ENCODE measurements at regions of chr4 and their contacts with region 1.

Region 1: DNA sequence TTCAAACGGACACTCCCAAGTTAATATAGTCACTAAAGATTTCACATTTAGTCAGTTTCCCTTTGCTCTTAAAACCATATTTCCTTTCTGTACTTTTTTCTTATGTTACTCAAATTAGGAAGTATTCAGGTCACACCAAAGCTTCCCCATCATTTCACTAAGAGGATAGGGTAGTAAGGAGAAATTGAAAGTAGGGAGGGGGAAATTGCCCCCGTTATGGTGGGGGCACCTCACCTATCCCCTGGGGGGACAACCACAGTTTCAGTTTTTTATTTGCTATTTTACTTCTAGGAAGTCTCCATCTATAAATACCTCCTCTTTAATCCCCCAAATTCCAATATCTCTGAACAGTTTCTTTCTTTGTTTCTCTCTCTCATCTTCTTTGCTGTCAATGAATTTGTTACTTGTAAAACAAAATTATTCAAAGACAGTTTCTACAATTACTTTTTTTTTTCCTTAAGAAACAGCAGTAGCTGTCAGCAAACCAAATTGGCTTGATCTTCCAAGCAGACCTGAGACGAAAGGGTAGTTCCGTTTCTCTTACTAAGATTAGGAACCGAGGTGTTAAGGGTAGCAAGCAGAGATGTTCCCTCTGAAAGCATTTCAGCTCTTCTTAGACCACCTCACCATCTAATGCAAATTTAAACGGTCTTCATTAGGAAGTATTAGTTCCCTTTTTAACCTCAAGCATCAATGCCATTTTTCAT is 160.2 kb upstream of the KLF3 start:
- DNase-seq: no peak
- H3K27ac ChIP-seq: no peak overlapping the region
- CTCF ChIP-seq: no peak

Region 2: GRCh38 chr4:38190717-38191178 is 313.1 kb before region 1 on chr4:
- CTCF ChIA-PET with region 1: no interaction called
- POLR2A ChIA-PET with region 1: no interaction called
- DNase-seq: peak; percentile 10
- H3K27ac ChIP-seq: peak overlapping the region; percentile 50
- CTCF ChIP-seq: no peak

Region 3: DNA sequence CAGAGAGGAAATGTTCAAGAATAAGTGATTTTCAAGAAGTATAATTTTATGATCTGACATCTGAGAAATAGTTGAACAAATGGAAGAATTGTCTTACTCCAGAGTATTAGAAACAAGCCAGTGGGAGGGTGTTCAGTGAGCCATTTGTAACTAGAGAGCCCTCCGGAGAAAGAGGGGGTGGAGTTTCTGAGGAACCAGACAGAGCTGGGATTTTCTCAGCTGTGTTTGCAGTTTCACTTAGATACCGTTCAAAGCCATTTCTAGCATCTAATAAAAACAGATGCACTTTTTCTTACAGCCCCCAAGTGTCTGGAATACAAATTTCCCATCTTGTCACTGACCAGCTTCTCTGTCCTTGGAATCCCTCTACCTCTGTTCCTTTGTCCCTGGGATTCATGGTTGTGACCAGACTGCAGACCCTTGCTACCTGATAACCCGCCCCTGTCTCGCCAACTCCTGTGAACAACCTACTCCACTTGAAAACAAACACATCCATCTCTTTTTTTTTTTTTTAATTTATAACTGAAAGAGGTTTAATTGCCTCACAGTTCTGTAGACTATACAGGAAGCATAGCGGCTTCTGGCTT is 27.4 kb after region 1 on chr4:
- CTCF ChIA-PET with region 1: interaction called, 10 read pairs
- POLR2A ChIA-PET with region 1: no interaction called
- DNase-seq: no peak
- H3K27ac ChIP-seq: no peak overlapping the region
- CTCF ChIP-seq: no peak

Measured in RWPE1 (cell line).